ENCODE measurements at regions of chr1 and their contacts with region 1.

Region 1: GRCh38 chr1:53869454-53870117 is 20.0 kb downstream of the YIPF1 start:
- DNase-seq: no peak
- ATAC-seq: no peak

Region 2: DNA sequence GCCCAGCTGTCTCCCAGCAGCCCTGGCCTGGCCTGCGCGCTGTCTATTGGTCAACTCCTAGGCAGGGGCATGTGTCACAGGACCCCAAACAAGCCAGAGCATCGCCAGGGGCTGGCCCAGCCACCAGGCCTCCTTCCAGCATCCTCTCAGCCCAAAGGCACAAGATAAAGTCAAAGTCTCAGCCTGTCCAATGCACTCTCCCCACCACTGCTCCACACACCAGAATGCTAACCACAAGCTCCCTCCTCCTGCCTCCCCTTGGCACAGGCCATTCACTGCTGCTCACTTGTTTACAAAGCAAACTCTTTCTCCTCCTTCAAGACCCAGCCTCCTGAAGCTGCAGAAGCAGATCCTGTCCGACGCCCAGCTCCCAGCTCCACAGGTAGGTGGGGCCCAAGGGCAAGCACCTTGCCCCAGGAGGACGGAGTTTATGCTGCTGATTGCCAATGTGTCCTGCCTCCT is 277.0 kb before region 1 on chr1:
- intact Hi-C with region 1: no loop called
- DNase-seq: peak; percentile 48
- ATAC-seq: no peak

Region 3: DNA sequence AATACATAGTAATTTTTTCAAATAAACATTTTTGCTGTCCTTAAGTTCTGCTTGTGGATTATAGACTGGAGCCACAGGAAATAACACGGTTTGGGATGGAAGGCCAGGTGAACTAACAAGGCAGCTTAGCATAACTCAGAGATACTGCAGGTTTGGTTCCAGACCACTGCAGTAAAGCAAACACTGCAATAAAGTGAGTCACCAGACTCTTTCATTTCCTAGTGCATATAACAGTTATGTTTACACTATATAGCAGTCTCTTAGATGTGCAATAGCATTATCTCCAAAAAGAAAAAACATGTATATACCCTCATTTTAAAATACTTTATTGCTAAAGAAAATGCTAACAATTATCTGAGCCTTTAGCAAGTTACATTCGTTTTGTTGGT is 98.5 kb after region 1 on chr1:
- intact Hi-C with region 1: loop called (anchors 5 kb)
- DNase-seq: no peak
- ATAC-seq: no peak